ENCODE measurements at regions of chr4 and their contacts with region 1.

Region 1: GRCh38 chr4:7939377-7940108 is at the start of gene AFAP1:
- DNase-seq: peak; percentile 29
- H3K4me3 ChIP-seq: peak within 1 kb of the TSS; percentile 59
- H3K27me3 ChIP-seq: no peaks in the 10 kb centered on the region
- CTCF ChIP-seq: no peak
- polyA plus RNA-seq, gene AFAP1: 28.9 and 48.5 TPM in 2 replicates

Region 2: GRCh38 chr4:6999172-7000055 is 940.1 kb before region 1 on chr4:
- CTCF ChIA-PET with region 1: no interaction called
- POLR2A ChIA-PET with region 1: interaction called, 16 read pairs
- DNase-seq: no peak
- H3K4me3 ChIP-seq: no peak overlapping the region
- H3K27me3 ChIP-seq: no peaks in the 10 kb centered on the region
- CTCF ChIP-seq: no peak

Region 3: DNA sequence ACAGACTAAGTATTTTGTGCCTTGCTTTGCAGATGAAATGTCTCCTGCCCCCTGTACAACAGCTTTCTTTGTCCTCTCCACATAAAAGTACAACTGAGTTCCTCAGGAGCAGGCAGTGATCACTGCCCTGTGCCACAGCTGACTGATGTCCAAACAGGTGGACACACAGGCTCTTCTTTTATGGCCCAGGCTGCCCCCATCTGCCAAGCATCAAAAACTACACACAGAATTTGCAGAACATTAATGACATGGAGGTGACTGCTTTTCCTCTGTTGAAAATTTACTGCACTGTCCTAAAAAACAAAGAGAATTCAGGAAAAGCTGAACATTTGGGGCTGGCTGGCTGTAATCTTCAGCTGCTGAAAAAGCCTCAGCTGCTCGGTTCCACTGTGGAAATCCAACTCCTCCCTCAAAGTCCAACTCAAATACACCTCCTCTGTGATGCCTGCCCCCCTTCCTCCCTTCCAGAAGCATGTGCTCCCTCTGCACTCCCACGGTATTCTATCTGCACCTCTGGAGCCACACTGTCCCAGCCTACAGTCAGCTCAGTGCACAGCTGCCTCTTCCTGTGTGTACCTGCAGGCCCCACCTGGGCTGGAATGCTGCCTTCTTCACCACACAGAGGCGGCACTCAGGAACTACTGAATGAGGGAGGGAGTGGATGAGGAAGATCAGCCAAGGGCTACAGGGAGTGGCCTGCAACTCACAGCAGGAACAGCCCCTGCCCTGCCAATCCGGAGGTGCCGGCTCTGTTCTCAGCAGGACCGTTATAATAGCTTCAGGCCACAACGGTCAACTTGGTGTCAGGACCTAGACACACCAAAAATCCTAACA is 10.2 kb before region 1 on chr4:
- CTCF ChIA-PET with region 1: interaction called, 18 read pairs
- POLR2A ChIA-PET with region 1: no interaction called
- DNase-seq: no peak
- H3K4me3 ChIP-seq: no peak overlapping the region
- H3K27me3 ChIP-seq: no peaks in the 10 kb centered on the region
- CTCF ChIP-seq: peak; percentile 39